GM18951 (cell line): ENCODE measurements at regions of chr20 and their contacts with region 1.

Region 1: GRCh38 chr20:19185090-19185489 is 27.4 kb upstream of the SLC24A3 start:
- POLR2A ChIP-seq: no peak

Region 2: GRCh38 chr20:18412221-18412901 is 772.7 kb before region 1 on chr20:
- in situ Hi-C with region 1: loop called (anchors 25 kb)
- POLR2A ChIP-seq: no peak

Region 3: GRCh38 chr20:18928626-18929025 is 256.5 kb before region 1 on chr20:
- in situ Hi-C with region 1: no loop called
- POLR2A ChIP-seq: no peak